Transverse colon (tissue), 4 donors: ENCODE measurements at regions of chr17 and their contacts with region 1.

Region 1: GRCh38 chr17:6473128-6473767 is 29.0 kb downstream of the PIMREG start:
- DNase-seq: peak; percentile 83
- H3K4me3 ChIP-seq: no peak overlapping the region
- H3K27ac ChIP-seq: no peak overlapping the region
- H3K4me1 ChIP-seq: peaks cover 0 to 3% (median 0%) of the 10 kb centered on the region in 4 donors
- H3K27me3 ChIP-seq: no peaks in the 10 kb centered on the region
- CTCF ChIP-seq: peak; percentile 92 to 96 (median 94)
- EP300 ChIP-seq: no peak
- POLR2A ChIP-seq: no peak

Region 2: DNA sequence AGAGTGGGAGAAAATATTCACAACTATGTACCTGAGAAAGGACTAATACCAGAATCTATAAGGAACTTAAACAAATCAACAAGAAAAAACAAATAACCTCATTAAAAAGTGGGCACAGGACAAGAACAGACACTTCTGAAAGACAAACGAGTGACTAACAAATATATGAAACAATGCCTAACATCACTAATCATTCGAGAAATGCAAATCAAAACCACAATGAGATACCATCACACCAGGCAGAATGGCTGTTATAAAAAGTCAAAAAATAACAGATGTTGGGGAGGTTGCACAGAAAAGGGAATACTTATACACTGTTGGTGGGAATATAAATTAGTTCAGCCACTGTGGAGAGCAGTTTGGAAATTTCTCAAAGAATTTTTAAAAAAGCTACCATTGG is 486.6 kb before region 1 on chr17:
- in situ Hi-C with region 1: no loop called
- intact Hi-C with region 1: no loop called
- DNase-seq: no peak
- H3K4me3 ChIP-seq: no peak overlapping the region
- H3K27ac ChIP-seq: no peak overlapping the region
- H3K4me1 ChIP-seq: no peaks in the 10 kb centered on the region
- H3K27me3 ChIP-seq: no peaks in the 10 kb centered on the region
- CTCF ChIP-seq: no peak
- EP300 ChIP-seq: no peak
- POLR2A ChIP-seq: no peak

Region 3: GRCh38 chr17:6421700-6422604 is 51.3 kb before region 1 on chr17:
- in situ Hi-C with region 1: no loop called
- intact Hi-C with region 1: no loop called
- DNase-seq: peak; percentile 80
- H3K4me3 ChIP-seq: no peak overlapping the region
- H3K27ac ChIP-seq: no peak overlapping the region
- H3K4me1 ChIP-seq: no peaks in the 10 kb centered on the region
- H3K27me3 ChIP-seq: peaks cover 9% of the 10 kb centered on the region
- CTCF ChIP-seq: peak; percentile 68 to 87 (median 78)
- EP300 ChIP-seq: no peak
- POLR2A ChIP-seq: no peak

Region 4: DNA sequence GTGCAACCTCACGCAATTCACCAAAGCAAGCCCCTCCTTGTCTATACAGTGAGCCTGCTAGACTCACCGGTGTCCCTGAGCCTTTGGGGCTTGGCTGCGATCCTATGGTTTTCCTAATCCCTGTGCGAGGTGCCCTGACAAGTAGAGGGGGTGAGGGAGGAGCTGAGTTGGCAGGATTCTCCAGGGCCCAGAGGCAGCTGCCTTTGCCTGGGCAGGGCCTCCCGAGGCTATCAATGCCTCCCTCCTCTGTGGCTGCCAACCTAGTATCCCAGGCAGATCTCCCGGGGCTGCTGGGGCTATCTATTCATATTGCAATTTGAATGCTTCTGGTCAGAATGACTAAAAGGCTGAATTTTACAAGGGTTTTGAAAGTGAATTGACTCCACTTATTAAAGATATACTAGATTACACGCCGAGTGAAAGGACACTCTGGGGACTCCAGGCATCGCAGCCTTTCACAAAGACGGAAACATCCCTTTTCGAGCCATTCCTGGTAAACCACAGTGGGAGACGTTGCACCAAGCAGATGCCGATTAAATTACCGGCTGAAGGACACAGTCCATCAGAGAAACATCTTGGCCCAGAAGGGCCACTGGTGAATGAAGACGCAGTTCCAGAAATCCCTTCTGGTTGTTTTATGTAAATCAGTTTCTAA is 94.4 kb after region 1 on chr17:
- in situ Hi-C with region 1: no loop called
- intact Hi-C with region 1: loop called (anchors 10 kb)
- DNase-seq: no peak
- H3K4me3 ChIP-seq: no peak overlapping the region
- H3K27ac ChIP-seq: no peak overlapping the region
- H3K4me1 ChIP-seq: no peaks in the 10 kb centered on the region
- H3K27me3 ChIP-seq: no peaks in the 10 kb centered on the region
- CTCF ChIP-seq: no peak
- EP300 ChIP-seq: no peak
- POLR2A ChIP-seq: no peak

Region 5: DNA sequence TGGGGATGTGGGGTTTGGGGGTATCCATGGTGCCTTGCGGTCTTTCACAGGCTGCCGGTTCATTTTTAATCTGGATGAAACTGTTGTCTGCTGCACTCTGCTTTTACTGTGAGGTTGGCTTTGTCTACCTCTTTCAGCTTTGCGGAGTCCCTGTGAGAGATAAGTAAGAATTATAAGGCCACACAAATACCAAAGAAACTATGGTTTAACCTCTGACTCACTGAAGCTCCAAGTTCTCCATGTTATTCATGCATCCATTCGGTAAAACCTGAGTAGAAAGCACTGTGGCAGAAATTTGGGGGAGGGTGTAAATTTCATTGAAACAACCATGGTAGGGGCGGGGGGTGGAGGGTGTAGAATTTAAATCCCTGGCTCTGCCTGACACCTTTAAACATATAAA is 136.8 kb after region 1 on chr17:
- in situ Hi-C with region 1: no loop called
- intact Hi-C with region 1: loop called (anchors 10 kb)
- DNase-seq: no peak
- H3K4me3 ChIP-seq: no peak overlapping the region
- H3K27ac ChIP-seq: no peak overlapping the region
- H3K4me1 ChIP-seq: no peaks in the 10 kb centered on the region
- H3K27me3 ChIP-seq: no peaks in the 10 kb centered on the region
- CTCF ChIP-seq: no peak
- EP300 ChIP-seq: no peak
- POLR2A ChIP-seq: no peak

Region 6: DNA sequence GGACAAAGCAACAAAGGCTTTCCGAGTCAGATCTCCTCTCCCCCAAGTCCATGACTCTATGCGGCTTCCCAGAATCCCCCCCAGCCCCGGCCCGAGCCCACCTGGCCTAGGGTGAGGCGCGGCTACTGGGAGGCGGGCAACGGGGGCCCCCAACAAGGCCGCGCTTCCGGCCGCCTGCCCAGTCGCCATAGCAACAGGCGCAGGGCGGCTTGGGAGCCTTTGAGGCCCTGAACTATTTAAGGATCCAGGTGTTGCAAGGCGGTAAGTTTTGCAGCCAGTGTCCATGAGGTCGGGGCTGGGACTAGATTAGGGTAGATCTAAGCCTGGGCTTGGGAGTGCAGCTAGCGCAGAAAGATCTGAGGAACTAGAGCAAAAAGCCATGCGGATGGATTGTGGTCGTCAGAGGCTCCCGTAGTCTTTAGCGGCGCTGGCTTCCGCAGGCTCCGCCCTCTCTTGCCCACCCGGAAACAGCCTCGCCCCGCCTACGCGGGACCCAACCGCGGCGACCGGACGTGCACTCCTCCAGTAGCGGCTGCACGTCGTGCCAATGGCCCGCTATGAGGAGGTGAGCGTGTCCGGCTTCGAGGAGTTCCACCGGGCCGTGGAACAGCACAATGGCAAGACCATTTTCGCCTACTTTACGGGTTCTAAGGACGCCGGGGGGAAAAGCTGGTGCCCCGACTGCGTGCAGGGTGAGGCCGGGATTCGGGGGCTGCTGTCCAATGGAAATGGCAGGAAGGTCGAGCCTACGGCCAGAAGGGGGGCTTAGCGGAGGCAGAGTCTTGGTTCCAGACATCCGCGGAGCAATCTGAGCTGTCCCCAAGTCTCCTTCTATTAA is 167.5 kb after region 1 on chr17 and contains the starts of genes KIAA0753 and TXNDC17:
- in situ Hi-C with region 1: loop called in 3 of 4 experiments (anchors 25 kb)
- intact Hi-C with region 1: no loop called
- DNase-seq: peak; percentile 94
- H3K4me3 ChIP-seq: peak within 1 kb of the TSS; percentile 73 to 92 (median 78)
- H3K27ac ChIP-seq: peak within 1 kb of the TSS; percentile 85 to 94 (median 92)
- H3K4me1 ChIP-seq: peaks cover 20 to 33% (median 30%) of the 10 kb centered on the region in 4 donors
- H3K27me3 ChIP-seq: no peaks in the 10 kb centered on the region
- CTCF ChIP-seq: no peak
- EP300 ChIP-seq: no peak
- POLR2A ChIP-seq: peak; percentile 95
- total RNA-seq, gene KIAA0753: 9.8 to 41.1 (median 16.9) TPM
- total RNA-seq, gene TXNDC17: 60.2 to 439 (median 238) TPM